Heart left ventricle (tissue), 16 donors: ENCODE measurements at regions of chr3 and their contacts with region 1.

Region 1: DNA sequence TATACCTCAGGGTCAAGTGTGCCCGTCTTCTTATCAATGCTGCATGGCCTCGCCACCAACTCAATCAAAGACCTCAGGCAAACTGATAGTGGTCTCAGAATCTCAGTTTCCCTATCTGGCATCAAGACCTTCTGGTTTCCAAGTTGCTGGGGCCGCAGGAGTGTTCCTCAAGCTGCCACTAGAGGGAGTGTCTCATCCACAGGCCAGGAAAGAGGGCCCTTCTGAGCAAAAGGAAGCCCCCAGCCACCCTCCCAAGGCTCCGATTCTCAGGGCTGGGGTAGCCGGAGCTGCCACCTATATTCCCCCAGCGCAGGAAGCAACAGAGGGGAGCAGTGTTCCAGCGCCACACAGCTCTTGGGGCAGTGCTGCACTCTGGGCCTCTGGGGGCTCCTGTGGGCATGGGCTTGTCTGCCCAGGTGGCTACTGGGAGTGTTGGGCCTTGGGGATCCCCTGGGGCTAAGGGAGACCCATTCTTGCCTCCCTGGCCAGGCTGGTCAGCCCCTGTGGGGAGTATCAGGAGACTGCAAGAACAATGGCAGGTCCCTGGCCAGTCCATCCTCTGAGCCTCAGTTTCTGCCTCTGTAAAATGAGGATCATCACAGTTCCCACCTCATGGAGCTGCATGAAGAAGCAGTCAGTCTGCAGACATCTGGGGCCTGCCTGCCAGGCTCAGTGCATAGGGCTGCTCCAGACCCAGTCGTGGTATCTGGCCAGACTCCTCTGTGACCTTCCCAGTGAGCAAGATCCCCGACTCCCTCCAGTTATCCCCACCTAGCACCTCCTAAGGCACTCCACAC is 23.4 kb upstream of the SEC13 start:
- DNase-seq: peak in 3 of 5 donors; percentile 26 to 56 (median 47)
- ATAC-seq: peak in 2 of 4 donors; percentile 52 to 63
- H3K4me3 ChIP-seq: no peak overlapping the region
- H3K27ac ChIP-seq: no peak overlapping the region
- H3K4me1 ChIP-seq: peaks cover 0 to 3% (median 0%) of the 10 kb centered on the region in 12 donors
- H3K27me3 ChIP-seq: peaks cover 0 to 4% (median 0%) of the 10 kb centered on the region in 9 donors
- CTCF ChIP-seq: peak; percentile 74 to 92 (median 85)
- POLR2A ChIP-seq: no peak

Region 2: DNA sequence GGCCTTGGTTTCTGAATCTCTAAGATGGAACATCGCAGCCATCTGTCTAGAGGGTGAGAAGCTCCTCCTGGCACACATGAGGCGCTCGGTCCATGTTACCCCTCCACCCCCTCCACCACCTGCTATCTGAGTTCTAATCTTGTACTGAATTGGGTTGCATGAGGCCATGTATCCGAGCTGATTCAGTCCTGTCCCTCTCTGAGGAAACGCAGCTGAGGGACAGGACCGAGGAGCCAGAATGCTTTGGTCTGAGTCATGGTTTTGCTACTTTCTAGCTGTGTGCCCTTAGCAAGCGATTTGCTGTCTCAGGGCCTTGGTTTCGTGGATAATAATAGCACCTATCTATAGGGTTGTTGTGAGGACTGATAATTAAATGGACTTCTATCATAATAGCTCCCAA is 64.3 kb after region 1 on chr3:
- intact Hi-C with region 1: loop called in 1 of 10 experiments (anchors 5 kb)
- DNase-seq: no peak
- ATAC-seq: no peak
- H3K4me3 ChIP-seq: no peak overlapping the region
- H3K27ac ChIP-seq: no peak overlapping the region
- H3K4me1 ChIP-seq: no peaks in the 10 kb centered on the region
- H3K27me3 ChIP-seq: no peaks in the 10 kb centered on the region
- CTCF ChIP-seq: no peak
- POLR2A ChIP-seq: no peak

Region 3: DNA sequence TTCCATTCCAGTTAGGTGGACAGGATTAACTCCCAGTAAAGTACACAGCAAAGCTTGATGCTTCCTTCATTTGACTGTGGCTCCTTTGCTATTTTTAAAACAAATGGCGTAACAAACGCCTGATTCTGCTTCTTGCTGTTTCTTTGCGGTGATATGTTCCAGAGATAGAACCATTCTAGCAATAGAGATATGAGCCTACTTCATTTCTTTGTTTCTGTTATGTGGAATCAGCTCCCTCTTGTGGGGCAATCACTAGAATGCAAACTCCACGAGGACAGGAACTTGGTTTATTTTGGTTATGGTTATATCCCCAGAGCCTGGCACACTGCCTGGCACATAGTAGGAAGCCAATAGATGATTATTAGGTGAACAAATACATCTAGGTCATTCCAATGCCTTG is 349.1 kb after region 1 on chr3:
- intact Hi-C with region 1: loop called in 7 of 10 experiments (anchors 2 to 10 kb)
- DNase-seq: no peak
- ATAC-seq: no peak
- H3K4me3 ChIP-seq: no peak overlapping the region
- H3K27ac ChIP-seq: no peak overlapping the region
- H3K4me1 ChIP-seq: no peaks in the 10 kb centered on the region
- H3K27me3 ChIP-seq: peaks cover 0 to 14% (median 0%) of the 10 kb centered on the region in 9 donors
- CTCF ChIP-seq: peak in 8 of 12 donors; percentile 13 to 43 (median 30)
- POLR2A ChIP-seq: no peak

Region 4: GRCh38 chr3:10738688-10739372 is 394.5 kb after region 1 on chr3:
- intact Hi-C with region 1: loop called in 9 of 10 experiments (anchors 2 to 5 kb)
- DNase-seq: peak; percentile 44 to 80 (median 63)
- ATAC-seq: peak in 3 of 4 donors; percentile 65 to 90 (median 80)
- H3K4me3 ChIP-seq: peak overlapping the region in 8 of 12 donors; percentile 10 to 55 (median 36)
- H3K27ac ChIP-seq: no peak overlapping the region
- H3K4me1 ChIP-seq: peaks cover 0 to 6% (median 0%) of the 10 kb centered on the region in 12 donors
- H3K27me3 ChIP-seq: peaks cover 0 to 63% (median 29%) of the 10 kb centered on the region in 9 donors
- CTCF ChIP-seq: peak; percentile 72 to 87 (median 80)
- POLR2A ChIP-seq: no peak